Activated naive CD4-positive, alpha-beta T cell treated with anti-CD3 and anti-CD28 coated beads, Interleukin-2, amount 10 ng/mL, durations not matched to agents 7 days and 5 days (primary cell): ENCODE measurements at regions of chr6 and their contacts with region 1.

Region 1: GRCh38 chr6:32868257-32868788 is 14.3 kb downstream of the PSMB9 start:
- DNase-seq: peak; percentile 91
- H3K4me3 Mint-ChIP-seq: no peak overlapping the region
- H3K27ac Mint-ChIP-seq: no peak overlapping the region
- H3K4me1 Mint-ChIP-seq: peaks cover 35% of the 10 kb centered on the region
- H3K27me3 Mint-ChIP-seq: peaks cover 7% of the 10 kb centered on the region

Region 2: DNA sequence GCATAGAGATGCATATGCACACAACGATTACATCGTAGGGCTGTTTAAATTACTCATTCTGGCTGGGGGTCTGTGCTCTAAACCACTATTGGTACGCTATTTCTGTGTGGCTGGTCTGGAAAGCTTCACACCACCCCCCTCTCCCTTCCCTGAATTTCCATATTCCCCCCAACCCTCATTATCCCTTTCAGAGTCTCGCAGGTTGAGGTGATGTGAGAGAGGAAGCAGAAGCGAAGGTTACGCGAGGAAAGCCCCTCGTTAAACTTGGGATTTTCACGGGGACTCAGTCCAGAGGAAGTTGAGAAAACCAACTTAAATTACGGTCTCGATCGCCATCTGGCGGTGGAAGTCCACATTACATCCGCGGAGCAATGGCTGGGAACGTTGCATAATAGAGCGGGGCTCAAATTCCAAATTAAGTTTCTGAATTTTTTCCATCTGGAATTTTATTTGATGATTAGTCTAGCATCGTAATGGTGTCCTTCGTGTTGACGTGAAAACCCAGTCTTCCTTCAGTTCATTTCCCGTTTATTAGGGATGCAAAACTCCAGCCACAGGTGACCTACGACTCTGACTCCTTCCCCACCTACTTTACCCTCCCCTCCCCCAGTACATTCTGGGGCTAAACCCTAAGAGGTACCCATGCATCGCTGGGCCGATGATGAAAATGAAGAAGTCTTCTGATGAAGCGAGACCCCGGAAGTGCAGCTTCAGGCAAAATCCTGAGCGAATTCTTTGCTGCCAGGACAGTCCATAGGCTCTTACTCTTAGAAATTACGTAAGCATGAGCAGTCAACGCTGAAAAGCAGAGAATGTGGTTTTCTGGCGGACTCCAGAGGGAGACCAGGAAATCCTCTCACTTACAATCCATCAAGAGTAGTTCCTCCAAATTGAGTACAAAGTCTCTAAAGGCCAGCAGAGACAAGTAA is 71.2 kb before region 1 on chr6:
- CTCF ChIA-PET with region 1: interaction called, 13 read pairs
- DNase-seq: peak; percentile 83
- H3K4me3 Mint-ChIP-seq: peak overlapping the region; percentile 27
- H3K27ac Mint-ChIP-seq: no peak overlapping the region
- H3K4me1 Mint-ChIP-seq: peaks cover 33% of the 10 kb centered on the region
- H3K27me3 Mint-ChIP-seq: peaks cover 56% of the 10 kb centered on the region

Region 3: GRCh38 chr6:32825966-32826365 is 42.4 kb before region 1 on chr6:
- CTCF ChIA-PET with region 1: interaction called, 32 read pairs
- DNase-seq: no peak
- H3K4me3 Mint-ChIP-seq: no peak overlapping the region
- H3K27ac Mint-ChIP-seq: no peak overlapping the region
- H3K4me1 Mint-ChIP-seq: peaks cover 22% of the 10 kb centered on the region
- H3K27me3 Mint-ChIP-seq: no peaks in the 10 kb centered on the region

Region 4: DNA sequence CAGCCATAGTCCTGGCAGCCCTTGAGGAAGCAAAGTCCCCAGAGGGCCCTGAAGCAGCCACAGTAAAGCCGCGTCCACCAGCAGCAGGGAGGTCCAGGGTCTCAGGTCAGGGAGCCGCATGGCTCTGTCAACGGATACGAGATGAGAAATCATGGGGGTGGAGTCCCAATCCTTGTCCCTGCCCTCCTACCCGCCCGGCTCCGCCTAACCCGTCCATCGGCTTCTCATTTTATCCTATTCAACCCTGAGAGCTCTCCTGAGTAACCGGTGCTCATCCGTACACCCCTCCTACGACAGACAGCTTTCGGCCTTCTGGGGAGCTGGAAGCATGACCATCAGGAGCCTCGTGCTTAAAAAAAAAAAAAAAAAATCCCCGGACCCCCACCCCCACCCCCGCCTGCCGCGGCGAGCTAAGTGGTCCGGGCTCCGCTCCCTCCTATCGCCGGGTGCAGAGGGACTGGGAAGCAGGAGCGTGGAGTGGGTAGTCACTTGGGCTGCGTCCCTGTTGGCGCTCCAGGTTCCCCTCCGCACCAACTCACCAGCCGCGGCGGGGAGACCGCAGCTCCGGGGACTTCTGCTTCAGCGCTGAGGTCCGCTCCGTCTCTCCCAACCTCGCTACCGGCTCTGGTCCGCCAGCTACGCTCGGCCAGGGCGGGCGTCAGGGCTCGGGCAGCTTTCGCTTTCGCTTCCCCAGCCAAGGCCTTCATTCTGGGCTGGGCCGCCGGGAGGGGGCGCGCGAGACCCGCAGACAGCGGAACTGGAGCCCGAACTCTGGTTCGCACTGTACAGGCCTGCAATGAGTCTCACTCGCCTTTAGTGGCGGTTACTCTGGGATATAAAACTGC is 30.0 kb before region 1 on chr6 and contains the start of gene TAP2:
- CTCF ChIA-PET with region 1: interaction called, 184 read pairs
- DNase-seq: peak; percentile 98
- H3K4me3 Mint-ChIP-seq: peak within 1 kb of the TSS; percentile 85
- H3K27ac Mint-ChIP-seq: peak within 1 kb of the TSS; percentile 100
- H3K4me1 Mint-ChIP-seq: peaks cover 86% of the 10 kb centered on the region
- H3K27me3 Mint-ChIP-seq: no peaks in the 10 kb centered on the region

Region 5: GRCh38 chr6:32843979-32844838 is 24.1 kb before region 1 on chr6 and contains the start of gene PSMB8:
- CTCF ChIA-PET with region 1: interaction called, 184 read pairs
- DNase-seq: peak; percentile 99
- H3K4me3 Mint-ChIP-seq: peak within 1 kb of the TSS; percentile 98
- H3K27ac Mint-ChIP-seq: peak within 1 kb of the TSS; percentile 100
- H3K4me1 Mint-ChIP-seq: peaks cover 80% of the 10 kb centered on the region
- H3K27me3 Mint-ChIP-seq: no peaks in the 10 kb centered on the region

Region 6: DNA sequence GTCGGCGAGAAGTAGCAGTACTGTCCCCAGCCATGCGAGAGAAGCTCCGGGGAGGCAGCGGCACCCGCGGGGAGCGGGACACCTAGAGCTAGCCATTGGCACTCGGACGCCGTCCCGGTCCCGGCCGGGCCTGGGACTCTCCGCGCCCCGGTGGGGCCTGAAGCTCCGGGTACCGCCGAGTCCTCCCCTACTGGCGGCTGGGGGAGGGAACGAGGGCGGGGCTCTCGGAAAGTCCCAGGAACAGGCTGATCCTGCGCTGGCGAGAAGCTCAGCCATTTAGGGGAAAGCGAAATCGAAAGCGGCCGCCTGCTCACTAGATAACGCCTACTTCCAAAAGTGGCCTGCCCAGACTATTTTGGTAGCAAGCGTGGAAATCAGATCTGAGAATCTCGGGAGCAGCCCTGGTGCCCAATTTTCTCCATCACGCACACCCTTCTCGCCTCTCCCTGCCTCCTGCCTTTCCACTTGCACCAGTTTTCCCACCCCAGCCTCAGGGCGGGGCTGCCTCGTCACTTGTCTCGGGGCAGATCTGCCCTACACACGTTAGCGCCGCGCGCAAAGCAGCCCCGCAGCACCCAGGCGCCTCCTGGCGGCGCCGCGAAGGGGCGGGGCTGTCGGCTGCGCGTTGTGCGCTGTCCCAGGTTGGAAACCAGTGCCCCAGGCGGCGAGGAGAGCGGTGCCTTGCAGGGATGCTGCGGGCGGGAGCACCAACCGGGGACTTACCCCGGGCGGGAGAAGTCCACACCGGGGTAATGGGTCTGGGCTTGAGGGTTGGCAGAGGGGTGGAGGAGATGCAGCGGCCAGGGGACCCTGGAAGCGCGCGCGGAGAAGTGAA is 14.6 kb before region 1 on chr6 and contains the starts of genes PSMB9 and TAP1:
- CTCF ChIA-PET with region 1: interaction called, 81 read pairs
- DNase-seq: peak; percentile 98
- H3K4me3 Mint-ChIP-seq: peak within 1 kb of the TSS; percentile 96
- H3K27ac Mint-ChIP-seq: peak within 1 kb of the TSS; percentile 99
- H3K4me1 Mint-ChIP-seq: peaks cover 63% of the 10 kb centered on the region
- H3K27me3 Mint-ChIP-seq: no peaks in the 10 kb centered on the region